Breast epithelium (tissue), 4 donors: ENCODE measurements at regions of chr5 and their contacts with region 1.

Region 1: GRCh38 chr5:146334074-146334533 is 4.5 kb upstream of the POU4F3 start:
- DNase-seq: no peak
- H3K4me3 ChIP-seq: no peak overlapping the region
- H3K27ac ChIP-seq: no peak overlapping the region
- H3K4me1 ChIP-seq: no peaks in the 10 kb centered on the region
- H3K27me3 ChIP-seq: peaks cover 2 to 73% of the 10 kb centered on the region in 2 donors
- CTCF ChIP-seq: no peak
- POLR2A ChIP-seq: no peak

Region 2: GRCh38 chr5:146001544-146002185 is 332.4 kb before region 1 on chr5:
- intact Hi-C with region 1: loop called (anchors 5 kb)
- DNase-seq: no peak
- H3K4me3 ChIP-seq: no peak overlapping the region
- H3K27ac ChIP-seq: no peak overlapping the region
- H3K4me1 ChIP-seq: no peaks in the 10 kb centered on the region
- H3K27me3 ChIP-seq: no peaks in the 10 kb centered on the region
- CTCF ChIP-seq: no peak
- POLR2A ChIP-seq: no peak